ENCODE measurements at regions of chr10 and their contacts with region 1.

Region 1: DNA sequence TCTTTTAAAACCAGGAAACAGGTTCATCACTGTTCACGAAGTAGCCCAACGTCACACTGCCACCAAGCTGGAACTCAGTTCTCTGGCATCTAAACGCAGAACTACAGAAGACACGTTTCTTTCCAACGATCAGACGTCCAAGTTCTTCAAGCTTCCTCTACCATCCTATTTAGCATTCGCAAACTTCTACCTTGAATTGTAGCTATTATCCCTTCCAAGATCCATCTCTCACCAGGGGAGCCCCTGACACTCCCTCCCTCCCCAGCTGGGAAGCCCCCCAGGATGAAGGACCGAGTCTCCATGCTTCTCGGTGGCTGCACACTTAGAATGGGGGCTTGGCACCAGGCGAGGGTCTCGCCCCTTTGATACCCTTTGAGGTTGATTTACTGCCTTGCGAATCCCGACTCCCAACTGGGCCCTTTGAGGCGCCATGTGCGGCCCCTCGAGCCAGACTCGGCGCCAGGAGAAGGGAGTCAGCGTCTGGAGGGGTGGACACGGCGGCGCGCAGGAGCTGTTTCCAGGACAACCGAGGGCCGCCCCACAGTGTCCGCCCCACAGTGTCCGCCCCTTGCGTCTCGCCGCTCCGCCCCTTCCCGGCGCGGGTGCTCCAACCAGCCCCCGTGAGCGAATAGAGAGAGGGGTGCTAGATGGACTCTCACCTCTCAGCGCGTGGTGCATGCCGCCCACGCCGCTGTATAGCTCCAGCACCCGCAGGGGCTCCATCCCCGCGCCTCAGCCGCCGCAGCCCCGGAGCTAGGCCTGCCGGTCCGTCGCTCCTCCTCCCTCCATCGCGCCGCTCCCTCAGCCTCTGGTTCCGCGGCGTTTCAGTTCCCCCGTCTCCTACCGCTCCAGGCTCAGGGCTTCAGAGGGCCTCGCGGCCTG is at the start of gene TRDMT1:
- DNase-seq: peak; percentile 89 to 92 (median 90)
- ATAC-seq: peak; percentile 100
- H3K4me3 ChIP-seq: peak within 1 kb of the TSS; percentile 68 to 95 (median 76)
- H3K27ac ChIP-seq: peak within 1 kb of the TSS; percentile 90 to 97 (median 94)
- H3K4me1 ChIP-seq: peaks cover 0 to 29% (median 10%) of the 10 kb centered on the region in 12 donors
- H3K27me3 ChIP-seq: no peaks in the 10 kb centered on the region
- CTCF ChIP-seq: peak in 5 of 12 donors; percentile 7 to 43 (median 35)
- POLR2A ChIP-seq: peak in 1 of 2 donors; percentile 70
- total RNA-seq, gene TRDMT1: 2.7 to 6.0 (median 4.6) TPM

Region 2: DNA sequence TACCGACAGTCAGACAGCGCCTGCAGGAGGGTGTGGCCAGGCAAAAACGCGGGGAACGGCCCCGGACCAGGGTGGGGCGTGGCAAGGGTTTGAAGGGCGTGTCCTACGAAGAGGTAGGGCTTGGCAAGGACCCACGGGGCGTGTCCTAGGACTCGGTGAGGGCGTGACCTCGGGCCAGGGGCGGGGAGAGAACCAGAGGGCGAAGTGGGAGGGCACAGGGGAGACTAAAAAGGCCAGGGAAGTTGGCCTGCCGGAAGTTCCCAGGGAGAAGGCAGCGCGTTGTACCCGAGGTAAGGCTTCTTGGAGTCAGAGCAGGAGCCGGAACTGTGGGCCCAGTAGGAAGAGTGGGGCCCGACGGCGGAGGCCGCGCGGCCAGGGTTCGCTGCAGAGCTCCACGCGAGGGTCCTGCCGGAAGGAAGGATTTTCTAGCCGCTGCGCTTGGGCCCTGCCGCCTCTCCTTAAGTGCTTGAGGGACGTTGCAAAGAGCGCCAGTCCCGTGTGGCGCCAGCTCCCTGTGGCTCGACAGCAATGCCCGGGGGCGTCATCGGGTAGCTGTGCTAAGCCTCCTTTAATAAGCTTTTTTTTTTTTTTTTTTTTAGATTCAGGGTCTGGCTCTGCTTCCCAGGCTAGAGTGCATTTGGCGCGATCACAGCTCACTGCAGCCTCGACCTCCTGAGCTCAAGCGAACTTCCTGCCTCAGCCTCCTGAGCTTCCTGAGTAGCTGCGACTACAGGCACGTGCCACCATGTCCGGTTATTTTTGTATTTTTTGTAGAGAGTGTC is 764.2 kb before region 1 on chr10 and contains the start of gene PTER:
- intact Hi-C with region 1: loop called in 1 of 10 experiments (anchors 10 kb)
- DNase-seq: peak; percentile 96 to 99 (median 98)
- ATAC-seq: peak; percentile 100
- H3K4me3 ChIP-seq: peak within 1 kb of the TSS; percentile 39 to 82 (median 68)
- H3K27ac ChIP-seq: peak within 1 kb of the TSS; percentile 37 to 93 (median 86)
- H3K4me1 ChIP-seq: peaks cover 0 to 51% (median 19%) of the 10 kb centered on the region in 12 donors
- H3K27me3 ChIP-seq: no peaks in the 10 kb centered on the region
- CTCF ChIP-seq: no peak
- POLR2A ChIP-seq: peak; percentile 50 to 89
- total RNA-seq, gene PTER: 7.4 to 19.3 (median 13.0) TPM

Region 3: DNA sequence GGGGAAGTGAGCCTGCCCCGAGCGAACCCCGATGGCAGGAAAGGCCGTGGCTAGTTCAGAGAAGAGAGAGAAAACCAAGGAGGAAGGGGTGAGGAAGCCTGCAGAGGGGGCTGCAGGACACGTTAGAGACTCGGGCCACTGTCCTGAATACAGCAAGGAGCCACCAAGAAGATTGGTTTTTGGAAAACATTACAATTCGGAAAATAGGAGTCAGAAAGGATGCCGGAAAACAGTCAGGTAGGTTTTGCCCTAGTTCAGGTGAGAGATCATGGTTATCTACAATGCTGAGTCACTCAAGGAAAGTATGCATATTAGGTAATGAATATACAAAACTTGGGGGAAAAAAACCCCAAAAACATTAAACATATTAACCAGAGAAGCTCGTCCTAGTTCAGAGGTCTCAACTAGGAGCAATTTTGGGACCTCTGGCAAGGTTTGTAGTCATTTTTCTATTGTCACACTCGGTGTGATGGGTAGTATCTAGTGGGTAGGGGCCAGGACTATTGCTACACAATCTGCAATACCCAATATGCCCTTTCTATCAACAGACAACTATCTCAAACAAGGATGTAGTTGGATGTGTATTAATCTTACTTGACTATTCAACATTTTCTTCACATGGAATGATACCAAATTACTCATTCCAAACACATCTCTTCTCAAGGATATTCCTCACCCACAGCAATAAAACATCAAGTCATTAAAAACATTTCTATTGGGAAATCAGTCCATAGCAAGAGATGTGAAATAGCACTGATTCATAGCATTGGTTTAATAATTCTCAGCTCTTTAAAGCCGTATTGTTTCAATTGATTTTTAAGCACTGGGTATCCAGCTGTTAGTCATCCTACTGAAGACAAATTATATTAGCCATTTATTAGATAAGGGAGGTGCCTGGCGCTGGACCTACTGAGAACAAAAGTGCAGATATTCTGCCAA is 309.5 kb before region 1 on chr10:
- intact Hi-C with region 1: loop called in 1 of 10 experiments (anchors 10 kb)
- DNase-seq: peak; percentile 53 to 71 (median 66)
- ATAC-seq: peak; percentile 58 to 95 (median 88)
- H3K4me3 ChIP-seq: no peak overlapping the region
- H3K27ac ChIP-seq: peak overlapping the region in 4 of 12 donors; percentile 9 to 40 (median 22)
- H3K4me1 ChIP-seq: peaks cover 0 to 11% (median 0%) of the 10 kb centered on the region in 12 donors
- H3K27me3 ChIP-seq: no peaks in the 10 kb centered on the region
- CTCF ChIP-seq: peak; percentile 35 to 78 (median 62)
- POLR2A ChIP-seq: no peak

Region 4: DNA sequence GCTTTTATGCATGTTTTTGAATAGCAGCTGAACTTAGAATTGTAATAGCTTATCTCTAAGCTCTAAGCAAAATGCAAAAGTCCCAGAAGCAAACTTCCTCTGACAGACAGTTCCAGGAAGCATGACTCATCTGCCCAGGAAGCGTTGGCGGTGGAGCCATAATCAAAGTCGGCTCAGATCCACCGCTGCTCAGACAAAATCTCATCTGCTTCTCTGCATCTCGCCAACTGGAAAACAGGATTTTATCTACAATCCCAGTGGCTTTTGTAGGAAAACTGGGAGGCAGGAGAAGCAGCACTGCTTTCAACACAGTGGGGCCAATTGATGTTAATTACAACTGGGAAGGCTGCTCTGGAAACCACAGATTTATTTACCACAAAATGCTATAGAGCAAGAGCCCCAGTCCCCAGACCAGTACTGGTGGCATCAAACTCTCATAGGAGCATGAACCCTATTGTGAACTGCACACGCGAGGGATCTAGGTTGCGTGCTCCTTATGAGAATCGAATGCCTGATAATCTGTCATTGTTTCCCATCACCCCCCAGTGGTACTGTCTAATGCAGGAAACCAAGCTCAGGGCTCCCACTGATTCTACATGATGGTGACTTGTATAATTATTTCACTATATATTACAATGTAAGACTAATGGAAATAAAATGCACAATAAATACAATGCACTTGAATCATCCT is 171.4 kb before region 1 on chr10:
- intact Hi-C with region 1: loop called in 1 of 10 experiments (anchors 10 kb)
- DNase-seq: peak; percentile 76 to 84 (median 81)
- ATAC-seq: peak; percentile 77 to 90 (median 84)
- H3K4me3 ChIP-seq: peak overlapping the region in 6 of 12 donors; percentile 14 to 36 (median 18)
- H3K27ac ChIP-seq: peak overlapping the region; percentile 19 to 88 (median 68)
- H3K4me1 ChIP-seq: peaks cover 3 to 86% (median 37%) of the 10 kb centered on the region in 12 donors
- H3K27me3 ChIP-seq: no peaks in the 10 kb centered on the region
- CTCF ChIP-seq: no peak
- POLR2A ChIP-seq: no peak

Region 5: GRCh38 chr10:17228091-17228940 is 27.2 kb after region 1 on chr10 and contains the start of gene VIM:
- intact Hi-C with region 1: loop called in 8 of 10 experiments (anchors 1 to 2 kb)
- DNase-seq: peak; percentile 89 to 94 (median 92)
- ATAC-seq: peak; percentile 49 to 83 (median 80)
- H3K4me3 ChIP-seq: peak within 1 kb of the TSS; percentile 64 to 99 (median 91)
- H3K27ac ChIP-seq: peak within 1 kb of the TSS; percentile 96 to 100 (median 98)
- H3K4me1 ChIP-seq: peaks cover 0 to 52% (median 30%) of the 10 kb centered on the region in 12 donors
- H3K27me3 ChIP-seq: peaks cover 0 to 17% (median 0%) of the 10 kb centered on the region in 9 donors
- CTCF ChIP-seq: peak in 4 of 12 donors; percentile 4 to 13 (median 9)
- POLR2A ChIP-seq: peak in 1 of 2 donors; percentile 67
- total RNA-seq, gene VIM: 249 to 1,163 (median 387) TPM

Region 6: GRCh38 chr10:17510242-17510908 is 309.2 kb after region 1 on chr10:
- intact Hi-C with region 1: no loop called
- DNase-seq: no peak
- ATAC-seq: no peak
- H3K4me3 ChIP-seq: no peak overlapping the region
- H3K27ac ChIP-seq: peak overlapping the region in 1 of 12 donors; percentile 18
- H3K4me1 ChIP-seq: peaks cover 0 to 38% (median 0%) of the 10 kb centered on the region in 12 donors
- H3K27me3 ChIP-seq: no peaks in the 10 kb centered on the region
- CTCF ChIP-seq: no peak
- POLR2A ChIP-seq: no peak